ENCODE measurements at regions of chr1 and their contacts with region 1.

Region 1: GRCh38 chr1:169694304-169695075 is 16.9 kb downstream of the SELL start:
- DNase-seq: peak in 7 of 9 donors; percentile 63 to 85 (median 76)
- ATAC-seq: peak; percentile 71
- H3K4me3 ChIP-seq: peak overlapping the region; percentile 18
- H3K4me3 Mint-ChIP-seq: peak overlapping the region in 9 of 10 donors; percentile 21 to 86 (median 71)
- H3K27ac ChIP-seq: peak overlapping the region; percentile 70
- H3K27ac Mint-ChIP-seq: peak overlapping the region in 4 of 9 donors; percentile 86 to 98 (median 94)
- H3K4me1 ChIP-seq: peaks cover 91 to 92% of the 10 kb centered on the region in 2 donors
- H3K4me1 Mint-ChIP-seq: peaks cover 0 to 89% (median 74%) of the 10 kb centered on the region in 7 donors
- H3K27me3 ChIP-seq: no peaks in the 10 kb centered on the region
- H3K27me3 Mint-ChIP-seq: no peaks in the 10 kb centered on the region

Region 2: GRCh38 chr1:168535536-168535935 is 1159.0 kb before region 1 on chr1:
- CTCF ChIA-PET with region 1: no interaction called
- POLR2A ChIA-PET with region 1: no interaction called
- intact Hi-C with region 1: loop called in 1 of 2 experiments (anchors 10 kb)
- DNase-seq: peak in 7 of 9 donors; percentile 40 to 66 (median 56)
- ATAC-seq: peak; percentile 89
- H3K4me3 ChIP-seq: peak overlapping the region; percentile 5
- H3K4me3 Mint-ChIP-seq: peak overlapping the region; percentile 60 to 86 (median 76)
- H3K27ac ChIP-seq: peak overlapping the region; percentile 43
- H3K27ac Mint-ChIP-seq: peak overlapping the region; percentile 83 to 96 (median 89)
- H3K4me1 ChIP-seq: peaks cover 55 to 59% of the 10 kb centered on the region in 2 donors
- H3K4me1 Mint-ChIP-seq: peaks cover 59 to 93% (median 86%) of the 10 kb centered on the region in 7 donors
- H3K27me3 ChIP-seq: no peaks in the 10 kb centered on the region
- H3K27me3 Mint-ChIP-seq: no peaks in the 10 kb centered on the region

Region 3: GRCh38 chr1:169572187-169572586 is 122.3 kb before region 1 on chr1:
- CTCF ChIA-PET with region 1: no interaction called
- POLR2A ChIA-PET with region 1: no interaction called
- intact Hi-C with region 1: no loop called
- DNase-seq: no peak
- ATAC-seq: no peak
- H3K4me3 ChIP-seq: no peak overlapping the region
- H3K4me3 Mint-ChIP-seq: no peak overlapping the region
- H3K27ac ChIP-seq: no peak overlapping the region
- H3K27ac Mint-ChIP-seq: peak overlapping the region in 1 of 9 donors; percentile 3
- H3K4me1 ChIP-seq: no peaks in the 10 kb centered on the region
- H3K4me1 Mint-ChIP-seq: peaks cover 0 to 14% (median 2%) of the 10 kb centered on the region in 7 donors
- H3K27me3 ChIP-seq: no peaks in the 10 kb centered on the region
- H3K27me3 Mint-ChIP-seq: peaks cover 0 to 5% (median 0%) of the 10 kb centered on the region in 5 donors

Region 4: DNA sequence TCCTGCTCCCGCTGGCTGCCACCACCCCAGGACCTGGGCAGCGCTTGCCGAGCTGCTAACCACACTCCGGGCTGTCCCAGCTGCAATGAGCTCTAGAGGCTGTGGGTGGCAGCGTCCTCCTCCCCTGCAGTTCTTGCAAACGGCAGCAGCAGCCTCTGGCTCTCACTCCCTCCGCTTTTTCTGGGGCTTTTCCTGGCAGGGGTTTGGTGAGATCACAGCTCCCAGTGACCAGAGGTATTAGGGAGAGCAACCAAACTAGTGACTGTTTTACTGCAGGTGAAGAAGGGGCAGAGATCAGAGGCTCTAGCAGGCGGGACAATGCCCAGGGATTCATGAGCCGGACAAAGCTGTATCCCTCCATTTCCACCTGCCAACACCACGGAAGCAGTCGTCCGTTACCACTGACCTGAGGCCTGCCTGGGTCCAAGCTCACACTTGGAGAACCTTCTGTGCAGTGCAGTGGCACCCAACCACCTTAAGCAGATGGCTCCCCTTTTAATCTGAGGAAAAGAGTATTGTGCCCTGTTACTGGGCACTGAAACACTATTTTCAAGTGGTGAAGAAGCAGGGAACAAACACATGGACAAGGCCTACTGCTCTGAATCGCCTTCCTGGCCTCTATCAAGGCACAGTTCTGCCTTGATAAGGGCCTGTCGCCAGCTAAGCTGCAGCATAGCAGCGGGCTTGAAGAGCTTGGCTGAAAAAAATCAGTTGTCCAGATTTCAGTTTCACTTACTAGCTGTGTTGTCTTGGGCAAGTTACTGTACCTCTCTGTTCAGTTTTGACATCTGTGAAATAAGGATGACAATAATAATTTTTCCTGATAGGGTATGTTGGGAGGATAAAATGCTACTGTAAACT is 107.9 kb before region 1 on chr1 and contains the start of gene F5:
- CTCF ChIA-PET with region 1: interaction called, 19 read pairs
- POLR2A ChIA-PET with region 1: interaction called, 20 read pairs
- intact Hi-C with region 1: loop called (anchors 1 to 5 kb)
- DNase-seq: peak; percentile 53 to 78 (median 74)
- ATAC-seq: peak; percentile 98
- H3K4me3 ChIP-seq: peak within 1 kb of the TSS; percentile 47
- H3K4me3 Mint-ChIP-seq: peak within 1 kb of the TSS; percentile 81 to 93 (median 90)
- H3K27ac ChIP-seq: peak within 1 kb of the TSS; percentile 66
- H3K27ac Mint-ChIP-seq: peak within 1 kb of the TSS; percentile 50 to 94 (median 86)
- H3K4me1 ChIP-seq: peaks cover 10 to 14% of the 10 kb centered on the region in 2 donors
- H3K4me1 Mint-ChIP-seq: peaks cover 18 to 71% (median 53%) of the 10 kb centered on the region in 7 donors
- H3K27me3 ChIP-seq: no peaks in the 10 kb centered on the region
- H3K27me3 Mint-ChIP-seq: peaks cover 0 to 4% (median 0%) of the 10 kb centered on the region in 5 donors
- total RNA-seq, gene F5: 3.7 to 14.6 (median 5.7) TPM

Region 5: DNA sequence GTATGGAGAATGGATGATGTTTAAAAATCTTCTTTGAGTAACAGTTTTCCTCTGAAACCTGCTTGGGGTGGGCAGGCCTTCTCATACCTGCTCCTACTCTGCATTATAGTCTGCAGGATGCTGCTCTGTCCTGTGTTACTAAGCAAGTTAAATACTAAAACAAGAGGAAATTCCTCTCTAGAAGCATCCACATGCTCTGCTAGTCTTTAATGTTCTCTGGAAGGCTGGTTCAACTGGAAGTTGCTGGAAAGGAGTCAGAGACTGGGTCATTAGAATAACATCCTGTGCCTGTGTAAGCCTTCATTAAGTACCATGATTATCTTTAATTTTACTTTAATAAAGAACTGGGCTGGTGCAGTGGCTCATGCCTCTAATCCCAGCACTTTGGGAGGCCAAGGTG is 70.4 kb before region 1 on chr1:
- CTCF ChIA-PET with region 1: interaction called, 11 read pairs
- POLR2A ChIA-PET with region 1: interaction called, 10 read pairs
- intact Hi-C with region 1: loop called in 1 of 2 experiments (anchors 2 kb)
- DNase-seq: no peak
- ATAC-seq: no peak
- H3K4me3 ChIP-seq: no peak overlapping the region
- H3K4me3 Mint-ChIP-seq: peak overlapping the region in 7 of 10 donors; percentile 7 to 85 (median 52)
- H3K27ac ChIP-seq: no peak overlapping the region
- H3K27ac Mint-ChIP-seq: peak overlapping the region in 8 of 9 donors; percentile 29 to 86 (median 80)
- H3K4me1 ChIP-seq: peaks cover 7 to 64% of the 10 kb centered on the region in 2 donors
- H3K4me1 Mint-ChIP-seq: peaks cover 42 to 86% (median 76%) of the 10 kb centered on the region in 7 donors
- H3K27me3 ChIP-seq: no peaks in the 10 kb centered on the region
- H3K27me3 Mint-ChIP-seq: no peaks in the 10 kb centered on the region

Region 6: GRCh38 chr1:169670836-169671235 is 23.7 kb before region 1 on chr1:
- CTCF ChIA-PET with region 1: interaction called, 11 read pairs
- POLR2A ChIA-PET with region 1: interaction called, 138 read pairs
- intact Hi-C with region 1: loop called (anchors 2 kb)
- DNase-seq: no peak
- ATAC-seq: no peak
- H3K4me3 ChIP-seq: no peak overlapping the region
- H3K4me3 Mint-ChIP-seq: peak overlapping the region in 8 of 10 donors; percentile 8 to 67 (median 38)
- H3K27ac ChIP-seq: no peak overlapping the region
- H3K27ac Mint-ChIP-seq: peak overlapping the region; percentile 56 to 94 (median 81)
- H3K4me1 ChIP-seq: peaks cover 7 to 32% of the 10 kb centered on the region in 2 donors
- H3K4me1 Mint-ChIP-seq: peaks cover 23 to 68% (median 65%) of the 10 kb centered on the region in 7 donors
- H3K27me3 ChIP-seq: no peaks in the 10 kb centered on the region
- H3K27me3 Mint-ChIP-seq: no peaks in the 10 kb centered on the region

Region 7: DNA sequence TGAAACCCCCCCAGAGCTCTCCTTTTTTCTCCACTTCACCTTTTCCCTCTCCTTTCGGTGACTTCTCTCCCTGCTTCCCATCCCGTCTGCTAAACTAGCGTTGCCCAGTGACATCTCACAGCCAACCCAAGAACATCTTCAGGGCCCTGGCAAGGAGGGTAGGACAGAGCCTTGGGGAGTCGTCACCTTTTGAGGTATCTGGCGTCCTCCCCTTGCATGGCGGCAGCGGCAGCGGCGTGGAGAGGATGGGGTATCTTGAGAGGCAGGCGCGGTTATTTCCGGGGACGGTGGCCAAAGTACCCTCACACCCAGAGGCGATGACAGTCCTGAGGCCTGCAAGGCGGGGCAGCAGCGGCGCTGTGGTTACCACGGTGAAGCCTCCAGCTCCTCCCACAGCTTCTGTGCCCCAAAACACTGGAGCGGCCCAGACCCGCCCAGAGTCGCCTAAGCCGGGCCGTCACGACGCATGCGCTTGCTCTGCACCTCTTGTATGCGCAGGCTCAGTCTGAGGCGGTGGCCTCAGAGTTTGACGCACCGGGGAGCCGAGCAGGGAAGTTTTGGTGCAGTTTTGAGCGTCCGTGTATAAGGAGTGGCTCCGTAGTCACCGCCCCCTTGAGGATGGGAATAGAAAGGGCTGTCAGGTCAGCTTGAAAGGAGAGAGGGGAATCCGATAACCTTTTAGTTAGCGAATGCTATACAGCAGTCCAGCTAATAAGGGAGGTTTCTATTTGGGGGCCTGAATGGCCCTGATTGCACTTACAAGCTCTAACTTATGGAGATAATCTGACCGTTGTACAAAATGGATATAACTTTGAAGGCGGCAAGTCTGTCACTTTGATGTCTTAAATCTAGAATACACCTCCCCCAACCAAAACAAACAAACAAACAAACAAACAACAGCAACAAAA is 380.0 kb after region 1 on chr1 and contains the start of gene KIFAP3:
- CTCF ChIA-PET with region 1: no interaction called
- POLR2A ChIA-PET with region 1: no interaction called
- intact Hi-C with region 1: loop called in 1 of 2 experiments (anchors 10 kb)
- DNase-seq: peak; percentile 84 to 94 (median 92)
- ATAC-seq: peak; percentile 96
- H3K4me3 ChIP-seq: peak within 1 kb of the TSS; percentile 76
- H3K4me3 Mint-ChIP-seq: peak within 1 kb of the TSS; percentile 89 to 99 (median 96)
- H3K27ac ChIP-seq: peak within 1 kb of the TSS; percentile 90
- H3K27ac Mint-ChIP-seq: peak within 1 kb of the TSS; percentile 83 to 98 (median 94)
- H3K4me1 ChIP-seq: peaks cover 15 to 37% of the 10 kb centered on the region in 2 donors
- H3K4me1 Mint-ChIP-seq: peaks cover 34 to 65% (median 57%) of the 10 kb centered on the region in 7 donors
- H3K27me3 ChIP-seq: no peaks in the 10 kb centered on the region
- H3K27me3 Mint-ChIP-seq: peaks cover 0 to 3% (median 0%) of the 10 kb centered on the region in 5 donors
- total RNA-seq, gene KIFAP3: 12.8 to 23.8 (median 20.1) TPM